ENCODE measurements at regions of chr16 and their contacts with region 1.

Region 1: GRCh38 chr16:57013229-57013628 is 23.9 kb downstream of the NLRC5 start:
- DNase-seq: no peak
- H3K4me3 Mint-ChIP-seq: peak overlapping the region; percentile 49
- H3K27ac Mint-ChIP-seq: peak overlapping the region; percentile 95
- H3K4me1 Mint-ChIP-seq: peaks cover 80% of the 10 kb centered on the region
- H3K27me3 Mint-ChIP-seq: no peaks in the 10 kb centered on the region

Region 2: GRCh38 chr16:56988948-56989945 is 24.0 kb before region 1 on chr16 and contains the start of gene NLRC5:
- CTCF ChIA-PET with region 1: interaction called, 12 read pairs
- POLR2A ChIA-PET with region 1: no interaction called
- DNase-seq: peak; percentile 97
- H3K4me3 Mint-ChIP-seq: peak within 1 kb of the TSS; percentile 100
- H3K27ac Mint-ChIP-seq: peak within 1 kb of the TSS; percentile 99
- H3K4me1 Mint-ChIP-seq: peaks cover 69% of the 10 kb centered on the region
- H3K27me3 Mint-ChIP-seq: no peaks in the 10 kb centered on the region
- total RNA-seq, gene NLRC5: 428 to 468 TPM

Region 3: GRCh38 chr16:57029161-57030160 is 16.2 kb after region 1 on chr16:
- CTCF ChIA-PET with region 1: no interaction called
- POLR2A ChIA-PET with region 1: no interaction called
- DNase-seq: no peak
- H3K4me3 Mint-ChIP-seq: no peak overlapping the region
- H3K27ac Mint-ChIP-seq: peak overlapping the region; percentile 36
- H3K4me1 Mint-ChIP-seq: peaks cover 72% of the 10 kb centered on the region
- H3K27me3 Mint-ChIP-seq: no peaks in the 10 kb centered on the region

Region 4: GRCh38 chr16:57084257-57084770 is 71.1 kb after region 1 on chr16:
- CTCF ChIA-PET with region 1: no interaction called
- POLR2A ChIA-PET with region 1: interaction called, 12 read pairs
- DNase-seq: peak; percentile 77
- H3K4me3 Mint-ChIP-seq: no peak overlapping the region
- H3K27ac Mint-ChIP-seq: peak overlapping the region; percentile 68
- H3K4me1 Mint-ChIP-seq: peaks cover 9% of the 10 kb centered on the region
- H3K27me3 Mint-ChIP-seq: no peaks in the 10 kb centered on the region